ENCODE measurements at regions of chr19 and their contacts with region 1.

Region 1: GRCh38 chr19:6767357-6768235 is at the start of gene SH2D3A:
- DNase-seq: peak; percentile 94 to 96 (median 96)
- H3K4me3 ChIP-seq: peak within 1 kb of the TSS; percentile 34 to 93 (median 76)
- H3K27ac ChIP-seq: peak within 1 kb of the TSS in 1 of 2 experiments; percentile 51
- H3K4me1 ChIP-seq: peaks cover 2 to 26% (median 21%) of the 10 kb centered on the region in 4 experiments
- H3K27me3 ChIP-seq: no peaks in the 10 kb centered on the region

Region 2: GRCh38 chr19:6737284-6738046 is 30.1 kb before region 1 on chr19 and contains the start of gene GPR108:
- CTCF ChIA-PET with region 1: interaction called, 22 read pairs
- POLR2A ChIA-PET with region 1: interaction called, 3 read pairs
- DNase-seq: peak; percentile 100
- H3K4me3 ChIP-seq: peak within 1 kb of the TSS; percentile 77 to 93 (median 79)
- H3K27ac ChIP-seq: peak within 1 kb of the TSS; percentile 95 to 98
- H3K4me1 ChIP-seq: peaks cover 5 to 54% (median 50%) of the 10 kb centered on the region in 4 experiments
- H3K27me3 ChIP-seq: no peaks in the 10 kb centered on the region

Region 3: DNA sequence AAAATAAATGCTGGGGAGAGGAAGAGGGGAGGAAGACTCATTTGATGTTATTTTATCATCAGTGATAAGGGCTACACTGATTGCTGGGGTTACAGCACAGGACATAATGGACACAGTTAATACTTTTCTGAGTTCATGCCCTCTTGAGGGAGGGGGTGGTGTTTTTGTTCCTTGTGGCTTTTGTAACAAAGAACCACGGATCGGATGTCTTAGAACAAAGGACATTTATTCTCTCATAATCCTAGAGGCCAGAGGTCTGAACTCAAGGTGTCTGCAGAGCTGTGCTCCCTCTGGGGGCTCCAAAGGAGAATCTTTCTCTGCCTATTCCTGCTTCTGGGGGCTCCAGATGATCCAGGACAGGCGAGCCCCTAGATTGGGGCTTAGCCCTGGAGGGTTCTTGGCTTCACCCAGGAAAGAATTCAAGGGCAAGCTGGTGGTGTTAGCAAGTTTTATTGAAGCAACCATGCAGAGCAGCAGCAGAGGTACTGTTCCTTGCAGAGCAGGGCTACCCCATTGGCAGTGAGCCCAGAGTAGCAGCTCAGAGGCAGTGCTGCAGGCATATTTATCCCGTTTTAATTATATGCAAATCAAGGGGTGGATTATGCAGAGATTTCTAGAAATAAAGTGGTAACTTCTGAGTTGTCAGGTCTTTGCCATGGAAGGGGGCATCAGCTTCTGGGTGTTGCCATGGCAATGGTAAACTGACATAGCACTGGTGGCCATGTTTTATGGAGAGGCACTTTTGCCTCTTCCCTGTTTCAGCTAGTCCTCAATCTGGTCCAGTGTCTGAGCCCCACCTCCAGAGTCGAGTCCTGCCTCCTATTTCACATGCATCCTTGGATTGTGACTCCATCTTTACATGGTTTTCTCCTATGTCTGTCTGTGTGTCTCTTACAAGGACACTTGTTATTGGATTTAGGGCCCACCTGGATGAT is 22.9 kb after region 1 on chr19:
- CTCF ChIA-PET with region 1: interaction called, 31 read pairs
- POLR2A ChIA-PET with region 1: interaction called, 3 read pairs
- DNase-seq: no peak
- H3K4me3 ChIP-seq: no peak overlapping the region
- H3K27ac ChIP-seq: no peak overlapping the region
- H3K4me1 ChIP-seq: no peaks in the 10 kb centered on the region
- H3K27me3 ChIP-seq: no peaks in the 10 kb centered on the region